T-cell (primary cell): ENCODE measurements at regions of chr5 and their contacts with region 1.

Region 1: GRCh38 chr5:181176254-181176952 is 28.6 kb downstream of the TRIM7 start:
- DNase-seq: no peak
- ATAC-seq: no peak
- H3K4me3 ChIP-seq: no peak overlapping the region
- H3K4me3 Mint-ChIP-seq: no peak overlapping the region
- H3K27ac ChIP-seq: no peak overlapping the region
- H3K27ac Mint-ChIP-seq: no peak overlapping the region
- H3K4me1 ChIP-seq: peaks cover 7 to 18% of the 10 kb centered on the region in 2 experiments
- H3K4me1 Mint-ChIP-seq: peaks cover 14 to 15% (median 15%) of the 10 kb centered on the region in 3 donors
- H3K27me3 ChIP-seq: peaks cover 14 to 49% of the 10 kb centered on the region in 2 experiments
- H3K27me3 Mint-ChIP-seq: peaks cover 0 to 42% of the 10 kb centered on the region in 2 donors

Region 2: GRCh38 chr5:180970875-180971274 is 205.5 kb before region 1 on chr5:
- CTCF ChIA-PET with region 1: no interaction called
- POLR2A ChIA-PET with region 1: no interaction called
- DNase-seq: no peak
- ATAC-seq: no peak
- H3K4me3 ChIP-seq: no peak overlapping the region
- H3K4me3 Mint-ChIP-seq: no peak overlapping the region
- H3K27ac ChIP-seq: no peak overlapping the region
- H3K27ac Mint-ChIP-seq: no peak overlapping the region
- H3K4me1 ChIP-seq: no peaks in the 10 kb centered on the region
- H3K4me1 Mint-ChIP-seq: peaks cover 0 to 9% (median 4%) of the 10 kb centered on the region in 3 donors
- H3K27me3 ChIP-seq: peaks cover 0 to 6% of the 10 kb centered on the region in 2 experiments
- H3K27me3 Mint-ChIP-seq: peaks cover 0 to 8% of the 10 kb centered on the region in 2 donors

Region 3: DNA sequence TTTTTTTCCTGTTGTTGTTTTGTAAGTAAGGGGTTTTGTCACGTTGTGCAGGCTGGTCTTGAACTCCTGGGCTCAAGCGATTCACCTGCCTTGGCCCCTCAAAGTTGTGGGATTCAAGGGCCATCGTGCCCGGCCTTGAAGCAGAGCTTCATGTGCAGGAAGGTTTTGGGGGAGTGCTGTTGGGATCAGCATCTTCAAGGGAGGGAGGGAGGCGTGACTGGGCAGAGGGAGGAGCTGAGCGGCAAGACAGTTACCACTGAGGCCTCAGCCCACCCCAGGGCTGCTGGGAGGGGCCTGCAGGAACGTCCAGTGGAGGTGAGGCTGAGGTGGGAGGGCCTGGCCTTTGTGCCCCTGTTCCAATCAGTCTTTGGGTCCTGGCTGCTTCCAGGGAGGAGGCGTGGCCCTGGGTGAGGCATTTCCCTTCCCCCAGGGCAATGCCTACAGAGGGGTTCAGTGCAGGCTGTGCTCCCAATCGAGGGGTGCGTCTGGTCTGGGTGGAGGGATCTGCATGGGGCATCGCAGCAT is 66.9 kb before region 1 on chr5:
- CTCF ChIA-PET with region 1: no interaction called
- POLR2A ChIA-PET with region 1: no interaction called
- DNase-seq: no peak
- ATAC-seq: no peak
- H3K4me3 ChIP-seq: no peak overlapping the region
- H3K4me3 Mint-ChIP-seq: no peak overlapping the region
- H3K27ac ChIP-seq: no peak overlapping the region
- H3K27ac Mint-ChIP-seq: no peak overlapping the region
- H3K4me1 ChIP-seq: no peaks in the 10 kb centered on the region
- H3K4me1 Mint-ChIP-seq: peaks cover 0 to 5% (median 3%) of the 10 kb centered on the region in 3 donors
- H3K27me3 ChIP-seq: peaks cover 5 to 79% of the 10 kb centered on the region in 2 experiments
- H3K27me3 Mint-ChIP-seq: peaks cover 67 to 81% of the 10 kb centered on the region in 2 donors

Region 4: DNA sequence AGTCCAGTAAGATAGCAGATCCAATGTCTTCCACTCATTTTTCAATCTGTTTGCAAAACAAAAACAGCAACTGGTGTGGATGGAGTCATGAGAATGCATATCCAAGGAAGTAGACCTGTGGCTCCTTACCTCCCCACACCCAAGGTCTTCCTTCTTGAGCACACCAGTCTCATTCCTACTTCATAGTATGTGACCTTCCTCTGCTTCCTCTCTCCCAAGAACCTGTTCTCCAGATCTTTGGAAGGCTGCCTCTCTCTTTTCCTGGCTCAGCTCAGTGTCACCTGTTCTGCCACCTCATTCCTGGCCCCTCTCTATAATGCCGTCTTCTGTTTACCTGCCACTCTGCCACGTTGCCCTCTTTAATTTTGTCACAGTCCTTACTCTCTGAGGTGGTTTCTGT is 36.5 kb after region 1 on chr5:
- CTCF ChIA-PET with region 1: interaction called in 1 of 2 experiments, 6 read pairs
- POLR2A ChIA-PET with region 1: interaction called in 1 of 2 experiments, 11 read pairs
- DNase-seq: no peak
- ATAC-seq: no peak
- H3K4me3 ChIP-seq: no peak overlapping the region
- H3K4me3 Mint-ChIP-seq: no peak overlapping the region
- H3K27ac ChIP-seq: no peak overlapping the region
- H3K27ac Mint-ChIP-seq: peak overlapping the region in 1 of 2 donors; percentile 61
- H3K4me1 ChIP-seq: peaks cover 6 to 23% of the 10 kb centered on the region in 2 experiments
- H3K4me1 Mint-ChIP-seq: peaks cover 14 to 39% (median 23%) of the 10 kb centered on the region in 3 donors
- H3K27me3 ChIP-seq: no peaks in the 10 kb centered on the region
- H3K27me3 Mint-ChIP-seq: no peaks in the 10 kb centered on the region